Panc1 (cell line): ENCODE measurements at regions of chr1 and their contacts with region 1.

Region 1: DNA sequence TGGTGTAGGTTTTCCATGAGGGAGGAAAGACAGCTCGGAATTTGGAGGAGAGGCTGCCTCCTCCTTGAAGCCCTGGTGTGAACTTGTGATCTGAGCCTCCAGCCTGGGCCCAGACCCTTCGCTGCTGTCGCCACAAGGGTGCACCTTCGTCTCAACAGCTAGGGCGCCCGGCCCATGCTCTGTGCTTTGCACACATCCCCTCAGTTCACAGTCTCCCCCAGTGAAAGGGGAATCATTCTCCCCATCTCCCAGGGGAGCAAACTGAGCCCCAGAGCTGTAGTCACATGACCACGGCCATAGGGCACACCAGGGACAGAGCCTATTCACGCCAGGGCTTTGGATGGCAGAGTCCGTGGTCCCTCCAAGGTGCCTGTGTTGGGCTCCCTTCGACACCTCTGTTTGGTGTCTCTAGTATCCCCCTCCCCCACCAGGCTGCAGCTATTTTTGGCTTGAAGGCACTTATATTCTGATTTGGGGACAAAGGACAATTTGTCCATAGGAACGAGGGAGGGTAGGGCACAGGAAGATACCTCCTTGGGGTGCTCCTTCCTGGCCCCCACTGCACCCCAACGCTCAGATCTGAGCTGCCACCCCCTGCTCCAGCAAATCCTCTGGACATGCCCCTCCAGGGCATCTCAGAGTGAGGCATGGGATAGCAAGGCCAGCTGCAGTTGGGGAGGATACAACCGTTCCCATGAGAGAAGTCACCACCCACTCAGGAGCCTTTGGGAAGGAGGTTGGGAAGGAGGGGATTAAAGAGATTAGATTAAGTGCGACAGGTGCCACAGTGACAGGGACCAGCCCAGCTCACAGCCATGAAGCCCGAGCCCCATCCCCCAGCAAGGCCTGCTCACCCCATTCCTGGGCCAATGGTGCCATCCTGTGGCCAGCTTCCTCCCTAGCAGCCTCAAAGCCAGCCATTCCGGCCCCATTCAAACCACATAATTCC is 15.7 kb downstream of the MATN1 start:
- DNase-seq: peak; percentile 33
- ATAC-seq: peak; percentile 91
- H3K4me3 ChIP-seq: no peak overlapping the region
- H3K27ac ChIP-seq: no peak overlapping the region
- H3K4me1 ChIP-seq: no peaks in the 10 kb centered on the region
- H3K27me3 ChIP-seq: no peaks in the 10 kb centered on the region; the same call in 1 of the 2 replicates
- CTCF ChIP-seq: peak; percentile 86

Region 2: GRCh38 chr1:29235955-29236684 is 1471.6 kb before region 1 on chr1 and contains the start of gene PTPRU:
- CTCF ChIA-PET with region 1: no interaction called
- POLR2A ChIA-PET with region 1: interaction called, 12 read pairs
- in situ Hi-C with region 1: no loop called
- intact Hi-C with region 1: loop called (anchors 5 kb)
- DNase-seq: no peak
- ATAC-seq: peak; percentile 90
- H3K4me3 ChIP-seq: peak within 1 kb of the TSS; percentile 27 to 54
- H3K27ac ChIP-seq: no peak within 1 kb of the TSS
- H3K4me1 ChIP-seq: peaks cover 9% of the 10 kb centered on the region
- H3K27me3 ChIP-seq: peaks cover 6% of the 10 kb centered on the region
- CTCF ChIP-seq: peak; percentile 96
- total RNA-seq, gene PTPRU: 0.72 TPM

Region 3: DNA sequence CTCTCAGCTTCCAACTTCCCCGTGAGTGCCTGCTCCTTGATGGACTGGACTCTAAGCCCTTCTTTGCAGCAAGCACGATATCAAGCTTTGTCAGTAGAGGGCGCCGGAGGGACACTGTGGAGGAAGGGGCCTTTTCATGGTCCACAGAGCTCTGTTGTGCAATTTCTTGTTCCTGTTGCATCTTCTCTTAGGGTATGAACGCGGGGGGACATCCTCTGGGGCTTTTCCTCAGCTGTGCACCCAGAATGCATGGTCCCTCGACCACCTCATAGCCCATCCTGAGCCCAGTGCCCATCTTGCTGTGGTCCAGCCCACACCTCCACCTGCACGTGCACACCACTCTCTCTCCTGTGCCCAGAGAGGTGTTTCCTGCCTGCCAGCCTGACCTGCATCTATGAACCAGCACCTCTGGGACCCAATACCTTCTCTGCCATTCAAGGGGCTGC is 914.6 kb before region 1 on chr1:
- CTCF ChIA-PET with region 1: interaction called, 4 read pairs
- POLR2A ChIA-PET with region 1: no interaction called
- in situ Hi-C with region 1: no loop called
- intact Hi-C with region 1: loop called (anchors 5 kb)
- DNase-seq: peak; percentile 51
- ATAC-seq: peak; percentile 93
- H3K4me3 ChIP-seq: no peak overlapping the region
- H3K27ac ChIP-seq: no peak overlapping the region
- H3K4me1 ChIP-seq: no peaks in the 10 kb centered on the region
- H3K27me3 ChIP-seq: no peaks in the 10 kb centered on the region
- CTCF ChIP-seq: peak; percentile 95

Region 4: GRCh38 chr1:30106125-30106524 is 601.6 kb before region 1 on chr1:
- CTCF ChIA-PET with region 1: no interaction called
- POLR2A ChIA-PET with region 1: no interaction called
- in situ Hi-C with region 1: no loop called
- intact Hi-C with region 1: loop called (anchors 10 kb)
- DNase-seq: no peak
- ATAC-seq: peak; percentile 88
- H3K4me3 ChIP-seq: no peak overlapping the region
- H3K27ac ChIP-seq: no peak overlapping the region
- H3K4me1 ChIP-seq: no peaks in the 10 kb centered on the region
- H3K27me3 ChIP-seq: peaks cover 17% of the 10 kb centered on the region
- CTCF ChIP-seq: peak; percentile 43